ENCODE measurements at regions of chr9 and their contacts with region 1.

Region 1: GRCh38 chr9:35696525-35697215 is 6.9 kb upstream of the TPM2 start:
- H3K4me3 ChIP-seq: no peak overlapping the region
- H3K27ac ChIP-seq: no peak overlapping the region
- H3K4me1 ChIP-seq: no peaks in the 10 kb centered on the region
- CTCF ChIP-seq: no peak; the same call in 1 of the 2 replicates

Region 2: DNA sequence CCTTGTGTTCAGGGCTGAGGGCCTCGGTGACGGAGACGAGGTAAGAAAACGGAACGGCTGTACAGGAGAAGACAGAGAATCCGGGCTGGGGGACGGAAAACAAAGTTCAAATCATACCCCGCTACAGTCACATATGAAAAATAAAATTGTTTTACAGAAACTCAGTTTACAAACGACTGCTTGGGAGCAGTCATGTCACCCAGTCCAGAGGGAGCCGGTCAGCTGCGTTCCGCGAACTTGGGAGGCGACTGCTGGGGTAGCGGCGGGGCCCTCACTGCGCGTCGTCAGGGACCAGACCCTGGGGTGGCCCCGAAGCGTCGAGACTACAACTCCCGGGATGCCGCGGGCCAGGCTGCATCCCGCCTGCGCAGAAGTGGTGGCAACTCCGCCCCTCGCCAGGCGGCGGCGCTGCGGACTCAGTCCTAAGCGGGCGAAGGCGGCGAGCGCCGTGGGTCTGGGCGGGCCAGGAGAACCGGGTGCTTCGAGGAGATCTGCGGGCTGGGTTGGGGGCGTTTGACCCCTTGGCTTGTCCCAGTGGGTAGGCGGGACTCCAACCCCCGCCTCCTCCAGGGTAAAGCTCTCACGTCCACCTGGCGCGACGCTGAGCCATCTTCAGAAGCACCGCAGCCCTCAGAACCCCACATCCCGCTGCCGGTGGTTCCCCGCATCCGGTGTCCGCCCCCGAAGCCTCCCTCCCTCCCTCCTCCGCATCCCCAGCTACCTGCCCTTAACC is 50.0 kb before region 1 on chr9:
- CTCF ChIA-PET with region 1: interaction called, 28 read pairs
- POLR2A ChIA-PET with region 1: no interaction called
- H3K4me3 ChIP-seq: peak overlapping the region; percentile 62
- H3K27ac ChIP-seq: peak overlapping the region; percentile 51
- H3K4me1 ChIP-seq: no peaks in the 10 kb centered on the region
- CTCF ChIP-seq: peak; percentile 94

Region 3: GRCh38 chr9:35664531-35665470 is 31.9 kb before region 1 on chr9 and contains the start of gene ARHGEF39:
- CTCF ChIA-PET with region 1: interaction called, 157 read pairs
- POLR2A ChIA-PET with region 1: interaction called, 23 read pairs
- H3K4me3 ChIP-seq: peak within 1 kb of the TSS; percentile 75
- H3K27ac ChIP-seq: peak within 1 kb of the TSS; percentile 64; the same call in 1 of the 2 replicates
- H3K4me1 ChIP-seq: no peaks in the 10 kb centered on the region
- CTCF ChIP-seq: peak; percentile 62; the same call in 1 of the 2 replicates

Region 4: GRCh38 chr9:35716230-35716629 is 19.6 kb after region 1 on chr9:
- CTCF ChIA-PET with region 1: interaction called, 47 read pairs
- POLR2A ChIA-PET with region 1: interaction called, 3 read pairs
- H3K4me3 ChIP-seq: no peak overlapping the region
- H3K27ac ChIP-seq: no peak overlapping the region
- H3K4me1 ChIP-seq: no peaks in the 10 kb centered on the region
- CTCF ChIP-seq: no peak

Region 5: GRCh38 chr9:35732122-35732799 is 35.6 kb after region 1 on chr9 and contains the starts of genes CREB3 and TLN1:
- CTCF ChIA-PET with region 1: interaction called, 88 read pairs
- POLR2A ChIA-PET with region 1: interaction called, 20 read pairs
- H3K4me3 ChIP-seq: peak within 1 kb of the TSS; percentile 81
- H3K27ac ChIP-seq: peak within 1 kb of the TSS; percentile 81
- H3K4me1 ChIP-seq: peaks cover 13% of the 10 kb centered on the region
- CTCF ChIP-seq: peak; percentile 81